ENCODE measurements at regions of chr12 and their contacts with region 1.

Region 1: GRCh38 chr12:110826592-110827200 is 20.1 kb upstream of the CCDC63 start:
- DNase-seq: peak; percentile 92
- H3K4me3 ChIP-seq: no peak overlapping the region
- H3K27ac ChIP-seq: no peak overlapping the region
- H3K4me1 ChIP-seq: peaks cover 4% of the 10 kb centered on the region
- CTCF ChIP-seq: peak; percentile 98

Region 2: DNA sequence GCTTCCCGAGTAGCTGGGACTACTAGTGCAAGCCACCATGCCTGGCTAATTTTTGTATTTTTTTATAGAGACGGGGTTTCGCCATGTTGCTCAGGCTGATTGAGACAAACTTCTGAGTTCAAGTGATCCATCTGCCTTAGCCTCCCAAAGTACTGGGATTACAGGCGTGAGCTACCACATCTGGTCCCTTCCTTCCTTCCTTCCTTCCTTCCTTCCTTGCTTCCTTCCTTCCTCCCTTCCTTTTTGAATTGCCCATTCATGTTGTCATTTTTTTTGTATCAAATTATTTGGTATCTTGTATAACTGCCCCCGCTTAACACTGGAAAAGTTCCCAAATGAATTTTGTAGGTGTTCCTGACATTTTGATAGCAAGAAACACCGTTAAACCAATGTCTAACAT is 312.9 kb before region 1 on chr12:
- CTCF ChIA-PET with region 1: no interaction called
- POLR2A ChIA-PET with region 1: no interaction called
- intact Hi-C with region 1: loop called (anchors 5 kb)
- DNase-seq: no peak
- H3K4me3 ChIP-seq: no peak overlapping the region
- H3K27ac ChIP-seq: no peak overlapping the region
- H3K4me1 ChIP-seq: no peaks in the 10 kb centered on the region
- CTCF ChIP-seq: no peak

Region 3: DNA sequence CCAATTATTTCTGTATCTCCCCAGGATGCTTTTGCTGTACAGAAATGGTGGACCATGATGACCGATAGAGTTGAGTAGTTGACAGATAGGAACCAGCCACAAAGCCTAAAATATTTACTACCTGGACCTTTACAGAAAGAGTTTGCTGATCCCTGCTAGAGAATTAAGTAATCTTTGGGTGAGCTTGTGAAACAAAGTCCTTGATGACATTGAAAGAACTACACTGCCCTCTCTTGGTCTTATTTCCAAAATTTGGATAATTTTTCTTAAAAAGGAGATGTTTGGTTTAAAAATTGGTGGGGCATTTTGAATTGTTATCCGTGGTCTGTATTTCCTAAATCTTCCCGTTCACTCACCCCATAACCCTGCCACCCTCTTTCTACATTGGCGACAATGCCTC is 226.4 kb before region 1 on chr12:
- CTCF ChIA-PET with region 1: no interaction called
- POLR2A ChIA-PET with region 1: no interaction called
- intact Hi-C with region 1: loop called (anchors 1 kb)
- DNase-seq: peak; percentile 70
- H3K4me3 ChIP-seq: no peak overlapping the region
- H3K27ac ChIP-seq: no peak overlapping the region
- H3K4me1 ChIP-seq: peaks cover 13% of the 10 kb centered on the region
- CTCF ChIP-seq: peak; percentile 84

Region 4: GRCh38 chr12:110698171-110698902 is 128.4 kb before region 1 on chr12:
- CTCF ChIA-PET with region 1: no interaction called
- POLR2A ChIA-PET with region 1: no interaction called
- intact Hi-C with region 1: loop called (anchors 2 kb)
- DNase-seq: peak; percentile 93
- H3K4me3 ChIP-seq: no peak overlapping the region
- H3K27ac ChIP-seq: no peak overlapping the region
- H3K4me1 ChIP-seq: peaks cover 22% of the 10 kb centered on the region
- CTCF ChIP-seq: peak; percentile 85

Region 5: DNA sequence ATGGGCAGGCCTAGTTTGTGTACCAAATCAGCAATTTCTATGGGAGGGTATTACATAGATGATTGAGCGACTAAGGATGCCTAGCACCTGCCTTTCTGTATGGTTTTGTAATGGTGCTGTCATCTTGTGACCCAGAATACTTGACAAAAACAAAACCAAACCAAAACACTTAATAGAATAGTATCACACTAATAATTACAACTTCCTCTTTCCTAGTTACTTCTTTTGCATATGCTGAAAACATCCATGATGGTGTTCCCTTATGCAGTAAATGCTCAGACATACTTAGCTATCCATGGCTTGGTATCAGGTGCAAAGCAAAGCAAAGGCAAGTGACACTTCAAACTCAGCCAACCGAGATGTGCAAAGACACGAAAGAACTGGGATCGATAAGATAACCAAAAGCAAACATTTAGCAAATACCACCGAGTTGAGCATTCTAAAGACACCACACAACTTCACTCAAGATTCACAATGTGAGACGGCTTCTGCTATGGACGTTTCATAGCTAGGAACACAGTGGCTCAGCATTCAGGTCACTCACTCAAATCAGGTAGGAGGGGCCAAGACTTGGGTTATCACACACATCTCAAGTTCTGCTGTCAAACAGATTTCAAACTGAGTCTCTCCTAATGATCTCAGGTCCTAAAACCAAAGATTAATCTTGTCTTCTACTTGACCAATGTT is 108.3 kb before region 1 on chr12:
- CTCF ChIA-PET with region 1: no interaction called
- POLR2A ChIA-PET with region 1: no interaction called
- intact Hi-C with region 1: loop called (anchors 5 kb)
- DNase-seq: no peak
- H3K4me3 ChIP-seq: no peak overlapping the region
- H3K27ac ChIP-seq: no peak overlapping the region
- H3K4me1 ChIP-seq: peaks cover 3% of the 10 kb centered on the region
- CTCF ChIP-seq: no peak

Region 6: GRCh38 chr12:110778833-110779577 is 47.7 kb before region 1 on chr12:
- CTCF ChIA-PET with region 1: no interaction called
- POLR2A ChIA-PET with region 1: no interaction called
- intact Hi-C with region 1: loop called (anchors 1 kb)
- DNase-seq: peak; percentile 95
- H3K4me3 ChIP-seq: peak overlapping the region; percentile 33
- H3K27ac ChIP-seq: peak overlapping the region; percentile 90
- H3K4me1 ChIP-seq: peaks cover 94% of the 10 kb centered on the region
- CTCF ChIP-seq: peak; percentile 62

Region 7: GRCh38 chr12:110813285-110813684 is 13.4 kb before region 1 on chr12:
- CTCF ChIA-PET with region 1: no interaction called
- POLR2A ChIA-PET with region 1: no interaction called
- intact Hi-C with region 1: no loop called
- DNase-seq: no peak
- H3K4me3 ChIP-seq: no peak overlapping the region
- H3K27ac ChIP-seq: no peak overlapping the region
- H3K4me1 ChIP-seq: peaks cover 41% of the 10 kb centered on the region
- CTCF ChIP-seq: no peak